ENCODE measurements at regions of chr6 and their contacts with region 1.

Region 1: DNA sequence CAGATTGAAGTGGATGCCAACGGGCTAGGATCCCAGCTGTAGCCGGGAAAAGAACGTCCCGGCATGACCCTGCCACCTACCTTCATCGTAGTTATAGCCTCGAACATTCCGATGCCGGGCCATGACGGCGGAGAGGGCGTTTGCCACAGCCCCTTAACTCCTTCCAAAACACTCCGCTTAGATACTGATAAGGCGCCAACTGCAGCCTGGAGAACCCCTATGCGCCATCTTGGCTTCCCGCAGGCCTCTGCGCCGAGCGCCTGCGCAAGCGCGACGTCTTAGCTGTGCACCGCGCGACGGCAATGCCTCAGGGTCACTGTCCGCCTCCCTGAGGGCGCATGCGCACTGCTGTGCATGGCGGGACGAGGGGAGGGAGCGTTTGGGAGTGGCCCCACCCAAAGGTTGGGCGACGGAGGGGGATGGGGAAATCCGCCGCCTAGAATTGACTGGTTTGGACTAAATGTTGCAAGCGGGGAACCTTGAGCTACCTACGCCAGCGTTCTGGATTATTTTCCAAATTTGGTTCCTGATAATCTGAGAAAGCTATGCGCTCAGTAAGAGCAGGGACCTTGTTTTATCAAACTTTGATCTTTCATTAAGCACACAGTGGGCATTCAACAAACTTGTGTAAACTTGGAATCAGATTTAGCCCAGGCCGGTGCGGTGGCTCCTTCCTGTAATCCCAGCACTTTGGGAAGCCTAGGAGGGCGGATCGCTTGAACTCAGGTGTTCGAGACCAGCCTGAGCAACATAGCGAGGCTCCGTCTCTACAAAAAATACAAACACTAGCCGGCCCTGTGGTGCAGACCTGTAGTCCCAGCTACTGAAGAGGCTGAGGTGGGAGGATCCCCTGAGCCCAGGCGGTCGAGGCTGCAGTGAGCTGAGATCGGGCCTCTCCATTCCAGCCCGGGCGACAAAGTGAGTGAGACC is at the start of gene HBS1L:
- DNase-seq: peak; percentile 97
- H3K4me3 Mint-ChIP-seq: peak within 1 kb of the TSS; percentile 90
- H3K27ac Mint-ChIP-seq: peak within 1 kb of the TSS; percentile 94
- H3K4me1 Mint-ChIP-seq: peaks cover 40% of the 10 kb centered on the region
- H3K27me3 Mint-ChIP-seq: no peaks in the 10 kb centered on the region
- total RNA-seq, gene HBS1L: 90.3 to 91.6 TPM

Region 2: DNA sequence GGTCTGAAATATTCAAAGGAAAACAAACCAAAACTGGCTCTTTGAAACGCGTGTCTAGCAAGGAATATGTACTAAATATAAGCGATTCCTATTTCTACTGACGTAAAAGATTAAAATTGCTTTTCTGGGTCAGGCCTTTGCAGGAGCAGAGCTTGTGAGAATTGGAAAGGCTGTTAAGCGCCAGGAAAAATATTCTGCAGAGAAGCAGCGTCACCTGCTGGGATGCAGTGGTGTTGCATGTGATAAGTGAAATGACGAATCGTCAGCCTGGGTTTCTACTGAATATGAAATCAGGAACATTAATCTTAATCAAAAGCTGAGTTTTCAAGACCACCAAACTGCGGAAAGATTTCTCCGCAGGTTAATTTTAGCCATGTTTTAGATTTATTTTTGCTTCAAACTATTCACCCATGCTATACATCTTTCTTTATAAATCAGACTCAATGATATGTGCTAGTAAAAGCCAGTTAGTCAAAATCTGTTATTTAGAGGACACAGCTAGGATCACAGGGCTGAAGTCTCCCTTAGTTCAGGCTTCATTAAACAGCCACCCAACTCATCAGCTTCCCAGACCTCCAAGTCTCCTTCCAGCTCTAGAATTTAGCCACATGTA is 172.3 kb before region 1 on chr6:
- CTCF ChIA-PET with region 1: no interaction called
- POLR2A ChIA-PET with region 1: no interaction called
- DNase-seq: peak; percentile 62
- H3K4me3 Mint-ChIP-seq: no peak overlapping the region
- H3K27ac Mint-ChIP-seq: no peak overlapping the region
- H3K4me1 Mint-ChIP-seq: no peaks in the 10 kb centered on the region
- H3K27me3 Mint-ChIP-seq: peaks cover 21% of the 10 kb centered on the region

Region 3: DNA sequence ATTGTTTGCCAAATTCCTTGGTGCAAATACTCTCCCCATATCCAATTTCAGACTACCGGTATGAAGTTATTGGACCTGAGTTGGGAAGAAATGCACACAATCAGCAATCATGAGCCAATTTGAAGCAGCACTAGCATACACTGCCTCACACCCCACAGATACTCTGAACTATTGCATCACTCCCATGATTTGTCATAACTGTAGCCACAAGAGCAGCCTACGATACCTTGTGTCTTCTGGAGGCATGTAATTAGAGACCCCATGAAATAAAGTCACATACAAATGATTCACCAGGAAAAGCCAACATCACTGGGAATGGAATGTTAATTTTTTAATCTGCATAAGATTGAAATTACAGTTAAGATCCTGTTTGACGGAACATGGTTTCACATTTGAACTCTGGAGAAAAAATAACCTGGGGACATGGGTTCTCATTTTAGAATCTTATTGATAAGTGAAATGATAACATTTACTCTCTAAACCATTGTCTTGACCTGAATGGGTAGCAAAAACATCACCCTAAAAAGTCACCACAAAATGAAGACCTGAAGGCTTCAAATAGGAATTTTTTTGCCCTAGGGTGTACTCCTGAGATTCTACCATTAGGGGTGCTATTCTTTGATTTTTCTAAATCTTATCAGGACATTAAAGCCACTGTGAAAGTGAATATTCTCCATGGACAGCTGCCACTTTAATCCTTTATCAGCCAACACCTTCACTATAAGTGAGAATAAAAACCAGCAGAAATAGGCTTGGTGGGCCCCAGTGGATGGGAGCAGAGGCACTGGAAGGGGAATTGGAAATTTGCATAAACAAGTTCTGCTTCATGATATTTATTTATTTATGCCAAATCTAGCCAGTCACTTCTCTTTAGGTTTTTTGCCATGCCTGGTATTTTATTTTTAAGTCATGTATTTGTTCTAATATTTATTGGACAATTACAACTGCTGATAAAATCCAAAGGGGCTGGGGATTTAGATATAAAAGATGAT is 34.3 kb after region 1 on chr6:
- CTCF ChIA-PET with region 1: interaction called, 28 read pairs
- POLR2A ChIA-PET with region 1: interaction called, 103 read pairs
- DNase-seq: peak; percentile 50
- H3K4me3 Mint-ChIP-seq: peak overlapping the region; percentile 69
- H3K27ac Mint-ChIP-seq: peak overlapping the region; percentile 83
- H3K4me1 Mint-ChIP-seq: peaks cover 76% of the 10 kb centered on the region
- H3K27me3 Mint-ChIP-seq: no peaks in the 10 kb centered on the region

Region 4: DNA sequence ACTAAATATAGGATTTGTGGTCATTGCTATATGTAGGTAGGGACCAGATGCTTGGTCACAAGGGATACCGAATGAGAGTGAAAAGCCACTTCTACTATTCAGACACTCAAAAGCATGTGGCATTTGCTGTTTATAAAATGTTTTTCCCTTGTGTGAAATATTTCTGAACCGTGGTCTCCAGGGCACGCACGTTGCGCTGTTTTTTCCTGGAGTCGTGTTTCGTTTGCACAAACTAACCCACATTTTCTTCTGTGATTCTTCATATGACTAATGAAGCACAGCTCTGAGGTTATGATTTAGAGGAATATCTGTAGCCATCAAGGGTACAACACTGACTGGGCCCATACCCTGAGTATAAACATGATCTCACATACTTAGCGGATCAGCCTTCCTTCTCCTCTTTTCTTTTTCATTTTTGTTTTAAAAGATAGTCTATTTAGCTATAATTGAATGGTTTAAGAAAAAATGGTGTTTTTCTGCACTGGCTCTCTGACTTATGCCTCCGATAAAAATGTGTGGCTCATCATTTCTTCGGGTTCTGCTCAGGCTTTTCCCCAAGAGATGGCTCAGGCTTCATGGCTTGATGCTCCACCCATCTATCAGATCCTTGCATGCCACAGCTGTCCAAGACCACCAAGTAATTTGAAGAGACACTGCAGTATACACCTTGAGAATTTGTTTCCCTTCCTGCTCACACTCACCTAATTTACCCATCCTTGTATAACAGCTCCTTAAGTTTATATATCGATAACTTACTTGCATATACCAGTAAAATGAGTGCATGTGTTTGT is 59.7 kb after region 1 on chr6:
- CTCF ChIA-PET with region 1: no interaction called
- POLR2A ChIA-PET with region 1: interaction called, 22 read pairs
- DNase-seq: peak; percentile 78
- H3K4me3 Mint-ChIP-seq: peak overlapping the region; percentile 46
- H3K27ac Mint-ChIP-seq: peak overlapping the region; percentile 95
- H3K4me1 Mint-ChIP-seq: peaks cover 75% of the 10 kb centered on the region
- H3K27me3 Mint-ChIP-seq: no peaks in the 10 kb centered on the region

Region 5: DNA sequence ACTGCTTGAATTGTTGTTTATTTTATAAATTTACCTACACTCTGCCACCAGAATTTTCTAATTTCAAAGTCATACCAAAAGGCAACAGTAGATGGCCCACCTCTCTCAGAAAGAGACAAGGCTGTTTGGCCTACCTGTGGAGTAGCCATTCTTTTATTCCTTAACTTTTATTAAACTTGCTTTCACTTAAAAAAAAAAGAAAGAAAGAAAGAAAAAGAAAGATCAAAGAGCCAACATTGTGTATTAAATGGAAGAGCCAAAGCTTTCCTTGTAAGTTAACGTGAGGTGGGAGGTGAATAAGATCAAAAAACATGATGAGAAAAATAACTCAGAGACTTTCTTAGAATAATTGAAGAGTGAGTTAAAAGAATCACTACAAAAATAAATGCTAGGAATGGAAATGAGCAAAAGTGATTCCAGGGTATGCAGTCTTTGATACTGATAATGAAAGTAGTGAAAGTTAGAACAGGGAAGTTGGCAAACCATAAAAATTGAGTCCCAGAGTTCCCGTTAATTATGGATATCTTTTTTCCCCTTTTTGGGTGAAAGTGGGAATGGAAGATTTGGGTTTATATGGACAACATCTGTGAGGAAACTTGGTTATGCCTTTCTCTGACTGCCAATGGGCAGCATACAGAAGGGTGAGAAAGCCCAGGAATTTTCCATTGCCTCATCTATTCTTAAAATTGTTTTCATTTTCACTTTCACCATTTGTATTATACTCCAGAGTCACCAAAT is 90.4 kb after region 1 on chr6:
- CTCF ChIA-PET with region 1: interaction called, 12 read pairs
- POLR2A ChIA-PET with region 1: interaction called, 11 read pairs
- DNase-seq: no peak
- H3K4me3 Mint-ChIP-seq: peak overlapping the region; percentile 44
- H3K27ac Mint-ChIP-seq: peak overlapping the region; percentile 36
- H3K4me1 Mint-ChIP-seq: peaks cover 64% of the 10 kb centered on the region
- H3K27me3 Mint-ChIP-seq: no peaks in the 10 kb centered on the region

Region 6: DNA sequence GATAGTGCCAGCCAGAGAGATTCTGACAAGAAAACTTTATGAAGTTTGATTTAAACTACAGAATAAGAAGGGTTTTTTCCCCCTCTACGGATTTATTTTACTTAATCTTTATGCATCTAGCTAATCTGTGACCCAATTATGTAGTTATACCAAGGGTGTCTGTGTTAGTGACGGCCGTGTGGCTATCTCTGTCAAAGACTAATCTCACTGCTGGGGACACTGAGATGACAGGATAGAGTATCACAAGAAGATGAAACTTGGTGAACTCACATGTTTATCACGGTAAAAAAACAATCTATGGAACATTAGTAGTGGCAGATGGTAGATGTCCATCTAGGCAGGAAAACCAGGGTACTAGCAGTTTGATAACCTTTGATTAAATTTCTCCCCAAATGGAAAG is 293.1 kb after region 1 on chr6:
- CTCF ChIA-PET with region 1: no interaction called
- POLR2A ChIA-PET with region 1: no interaction called
- DNase-seq: no peak
- H3K4me3 Mint-ChIP-seq: no peak overlapping the region
- H3K27ac Mint-ChIP-seq: no peak overlapping the region
- H3K4me1 Mint-ChIP-seq: peaks cover 8% of the 10 kb centered on the region
- H3K27me3 Mint-ChIP-seq: no peaks in the 10 kb centered on the region